Activated CD4-positive, alpha-beta T cell treated with anti-CD3 and anti-CD28 coated beads, Interleukin-2, amount 10 ng/mL, durations not matched to agents 24 days and 14 days (primary cell): ENCODE measurements at regions of chr9 and their contacts with region 1.

Region 1: DNA sequence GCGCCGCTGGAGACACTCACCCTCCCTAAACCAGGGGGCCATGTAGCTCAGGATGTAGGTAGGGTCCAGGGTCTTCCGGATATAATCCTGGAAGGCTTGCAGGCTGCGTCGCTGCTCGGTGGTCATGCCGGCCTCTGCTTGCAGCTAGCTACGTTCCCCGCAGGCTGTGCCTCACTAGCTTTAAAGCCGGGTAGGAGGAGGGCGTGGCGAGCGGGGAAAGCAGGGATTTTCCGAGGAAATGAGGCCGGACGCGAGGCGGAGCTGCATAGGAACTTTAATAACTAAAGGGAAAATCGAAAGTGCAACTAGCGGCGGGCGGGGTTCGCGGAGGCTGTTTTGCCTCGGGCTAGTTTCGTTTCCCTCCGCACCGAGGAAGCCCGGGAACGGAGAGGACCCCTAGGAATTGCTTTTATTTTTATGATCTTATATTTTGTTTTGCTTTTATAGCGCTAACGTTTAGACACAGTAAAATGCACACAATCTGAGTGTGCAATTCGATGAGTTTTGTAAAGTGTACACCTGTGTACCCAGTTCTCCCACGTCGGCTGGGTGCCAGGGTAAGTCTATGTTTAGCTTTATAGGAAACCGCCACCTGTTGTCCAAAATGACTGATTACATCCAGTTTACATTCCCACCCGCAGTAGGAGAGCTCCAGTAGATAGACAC is at the start of gene RIGI:
- DNase-seq: peak; percentile 96
- H3K4me3 Mint-ChIP-seq: peak within 1 kb of the TSS; percentile 94
- H3K27ac Mint-ChIP-seq: peak within 1 kb of the TSS; percentile 80
- H3K4me1 Mint-ChIP-seq: peaks cover 39% of the 10 kb centered on the region
- H3K27me3 Mint-ChIP-seq: no peaks in the 10 kb centered on the region
- total RNA-seq, gene RIGI: 5.5 and 6.1 TPM in 2 replicates

Region 2: GRCh38 chr9:32384364-32385151 is 141.6 kb before region 1 on chr9 and contains the start of gene ACO1:
- intact Hi-C with region 1: loop called (anchors 1 kb)
- DNase-seq: peak; percentile 97
- H3K4me3 Mint-ChIP-seq: peak within 1 kb of the TSS; percentile 85
- H3K27ac Mint-ChIP-seq: peak within 1 kb of the TSS; percentile 23
- H3K4me1 Mint-ChIP-seq: peaks cover 12% of the 10 kb centered on the region
- H3K27me3 Mint-ChIP-seq: peaks cover 32% of the 10 kb centered on the region
- total RNA-seq, gene ACO1: 7.4 TPM in 2 replicates

Region 3: GRCh38 chr9:32550562-32551433 is 24.6 kb after region 1 on chr9:
- intact Hi-C with region 1: loop called (anchors 1 kb)
- DNase-seq: peak; percentile 98
- H3K4me3 Mint-ChIP-seq: peak overlapping the region; percentile 99
- H3K27ac Mint-ChIP-seq: peak overlapping the region; percentile 100
- H3K4me1 Mint-ChIP-seq: peaks cover 40% of the 10 kb centered on the region
- H3K27me3 Mint-ChIP-seq: no peaks in the 10 kb centered on the region

Region 4: GRCh38 chr9:32755730-32756129 is 229.6 kb after region 1 on chr9:
- intact Hi-C with region 1: no loop called
- DNase-seq: no peak
- H3K4me3 Mint-ChIP-seq: no peak overlapping the region
- H3K27ac Mint-ChIP-seq: no peak overlapping the region
- H3K4me1 Mint-ChIP-seq: no peaks in the 10 kb centered on the region
- H3K27me3 Mint-ChIP-seq: no peaks in the 10 kb centered on the region